ENCODE measurements at regions of chr17 and their contacts with region 1.

Region 1: GRCh38 chr17:48335858-48336500 is 94.0 kb downstream of the SKAP1 start:
- DNase-seq: no peak
- ATAC-seq: peak in 1 of 2 donors; percentile 36
- H3K4me3 ChIP-seq: no peak overlapping the region
- H3K27ac ChIP-seq: no peak overlapping the region
- H3K4me1 ChIP-seq: no peaks in the 10 kb centered on the region
- H3K27me3 ChIP-seq: peaks cover 7 to 26% (median 14%) of the 10 kb centered on the region in 3 donors
- CTCF ChIP-seq: peak in 4 of 5 experiments; percentile 43 to 75 (median 64)
- POLR2A ChIP-seq: no peak

Region 2: DNA sequence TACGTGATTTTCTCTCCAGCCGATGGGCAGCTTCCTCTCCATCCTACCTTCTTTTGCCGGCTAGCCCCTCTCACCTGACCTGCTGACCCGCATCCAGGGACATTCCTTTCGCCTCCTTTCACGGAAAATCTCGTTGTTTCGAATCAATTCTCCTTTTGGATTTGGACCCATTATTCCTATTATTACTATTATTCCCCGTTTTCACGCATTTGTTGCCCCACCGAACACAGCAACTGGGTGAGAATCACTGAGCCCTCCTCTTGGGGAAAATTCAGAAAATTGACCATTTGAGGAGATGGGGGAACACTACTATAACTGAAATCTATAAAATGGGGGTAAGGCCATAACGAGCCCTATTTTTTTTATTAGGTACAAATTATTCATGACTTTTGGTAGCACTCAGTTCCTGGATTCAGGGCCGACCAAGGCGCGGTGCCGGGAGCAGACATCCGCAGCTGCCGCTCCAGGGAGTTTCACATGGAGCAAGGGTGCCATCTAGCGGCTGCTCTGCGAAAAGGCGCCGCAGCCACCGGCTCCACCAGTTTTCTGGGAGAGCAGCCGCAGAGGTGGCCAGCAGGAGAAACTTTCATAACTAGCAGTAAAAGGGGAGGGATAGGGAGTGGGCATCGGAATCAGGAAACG is 282.4 kb after region 1 on chr17:
- in situ Hi-C with region 1: no loop called
- intact Hi-C with region 1: loop called (anchors 5 kb)
- DNase-seq: peak; percentile 64 to 76
- ATAC-seq: peak; percentile 89 to 90
- H3K4me3 ChIP-seq: peak overlapping the region in 1 of 4 donors; percentile 8
- H3K27ac ChIP-seq: no peak overlapping the region
- H3K4me1 ChIP-seq: no peaks in the 10 kb centered on the region
- H3K27me3 ChIP-seq: peaks cover 98 to 99% (median 99%) of the 10 kb centered on the region in 3 donors
- CTCF ChIP-seq: peak; percentile 93 to 98 (median 97)
- POLR2A ChIP-seq: no peak

Measured in gastrocnemius medialis (tissue), 4 donors.